Mucosa of descending colon (tissue), 3 donors: ENCODE measurements at regions of chr10 and their contacts with region 1.

Region 1: GRCh38 chr10:119199231-119199992 is 8.0 kb upstream of the GRK5 start:
- DNase-seq: peak in 2 of 3 donors; percentile 49 to 73
- ATAC-seq: peak; percentile 93
- H3K4me3 ChIP-seq: no peak overlapping the region
- H3K4me1 ChIP-seq: no peaks in the 10 kb centered on the region
- CTCF ChIP-seq: peak; percentile 60

Region 2: GRCh38 chr10:119165171-119166110 is 34.0 kb before region 1 on chr10 and contains the start of gene SFXN4:
- intact Hi-C with region 1: no loop called
- DNase-seq: peak; percentile 85 to 90 (median 88)
- ATAC-seq: peak; percentile 98
- H3K4me3 ChIP-seq: peak within 1 kb of the TSS; percentile 66
- H3K4me1 ChIP-seq: peaks cover 9% of the 10 kb centered on the region
- CTCF ChIP-seq: no peak
- total RNA-seq, gene SFXN4: 25.4 to 48.8 (median 34.6) TPM

Region 3: GRCh38 chr10:119305860-119306513 is 106.6 kb after region 1 on chr10:
- intact Hi-C with region 1: no loop called
- DNase-seq: peak; percentile 51 to 63 (median 57)
- ATAC-seq: peak; percentile 76
- H3K4me3 ChIP-seq: no peak overlapping the region
- H3K4me1 ChIP-seq: peaks cover 4% of the 10 kb centered on the region
- CTCF ChIP-seq: no peak

Region 4: DNA sequence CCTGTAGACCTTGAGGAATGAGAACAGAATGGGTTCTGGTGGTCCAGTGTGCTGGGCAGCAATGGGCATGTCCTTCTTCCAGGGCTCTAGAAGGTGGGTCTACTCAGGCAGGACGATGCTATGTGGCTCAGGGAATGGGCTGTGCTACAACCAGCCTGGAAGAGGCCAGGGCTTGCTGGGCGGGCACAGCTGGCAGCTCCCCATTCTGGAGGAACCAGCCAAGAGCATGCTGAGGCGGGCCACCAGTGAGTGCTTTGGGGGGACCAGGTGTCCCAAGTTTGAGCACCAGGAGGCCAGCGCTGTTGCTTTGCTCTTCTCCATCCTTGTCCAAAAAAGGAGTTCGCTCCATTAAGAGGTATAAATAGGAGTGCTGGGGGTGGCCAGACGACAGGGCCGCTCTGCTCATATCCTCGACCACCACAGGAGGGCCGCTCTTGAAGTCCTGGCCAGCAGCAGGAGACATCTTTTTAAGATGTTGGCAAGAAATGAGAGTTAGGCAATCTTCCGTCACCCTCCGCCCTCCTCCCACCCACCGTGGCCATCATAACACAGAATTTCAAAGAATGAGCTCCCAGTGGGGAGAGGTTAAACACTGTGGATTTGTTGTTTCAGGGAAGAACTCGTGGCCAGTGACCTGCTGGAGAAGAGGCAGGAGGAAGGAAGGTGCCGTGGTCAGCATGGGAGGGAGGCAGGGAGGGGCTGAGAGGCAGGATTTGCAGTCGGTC is 149.3 kb after region 1 on chr10:
- intact Hi-C with region 1: no loop called
- DNase-seq: no peak
- ATAC-seq: peak; percentile 24
- H3K4me3 ChIP-seq: no peak overlapping the region
- H3K4me1 ChIP-seq: no peaks in the 10 kb centered on the region
- CTCF ChIP-seq: no peak

Region 5: DNA sequence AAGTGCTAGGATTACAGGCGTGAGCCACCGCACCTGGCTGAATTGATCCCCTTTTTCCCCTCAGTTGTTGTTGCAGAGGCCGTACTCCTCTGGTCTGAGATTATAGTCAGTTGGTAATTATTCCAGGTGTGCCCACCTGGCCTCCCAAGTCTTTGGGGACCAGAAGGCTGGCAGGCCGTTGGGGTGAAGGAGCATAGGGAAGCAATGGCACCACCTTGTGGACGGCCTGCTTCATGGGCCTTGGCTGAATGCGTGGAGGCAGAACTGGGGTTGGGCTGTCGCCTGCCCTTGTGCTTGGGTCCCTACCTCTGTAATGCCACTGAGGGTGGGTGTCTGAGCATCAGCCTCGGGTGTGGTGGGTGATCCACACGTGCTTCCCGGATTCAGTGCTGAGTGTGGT is 217.4 kb after region 1 on chr10:
- intact Hi-C with region 1: loop called (anchors 5 to 10 kb)
- DNase-seq: peak; percentile 70 to 81 (median 75)
- ATAC-seq: peak; percentile 71
- H3K4me3 ChIP-seq: no peak overlapping the region
- H3K4me1 ChIP-seq: no peaks in the 10 kb centered on the region
- CTCF ChIP-seq: peak; percentile 24

Region 6: DNA sequence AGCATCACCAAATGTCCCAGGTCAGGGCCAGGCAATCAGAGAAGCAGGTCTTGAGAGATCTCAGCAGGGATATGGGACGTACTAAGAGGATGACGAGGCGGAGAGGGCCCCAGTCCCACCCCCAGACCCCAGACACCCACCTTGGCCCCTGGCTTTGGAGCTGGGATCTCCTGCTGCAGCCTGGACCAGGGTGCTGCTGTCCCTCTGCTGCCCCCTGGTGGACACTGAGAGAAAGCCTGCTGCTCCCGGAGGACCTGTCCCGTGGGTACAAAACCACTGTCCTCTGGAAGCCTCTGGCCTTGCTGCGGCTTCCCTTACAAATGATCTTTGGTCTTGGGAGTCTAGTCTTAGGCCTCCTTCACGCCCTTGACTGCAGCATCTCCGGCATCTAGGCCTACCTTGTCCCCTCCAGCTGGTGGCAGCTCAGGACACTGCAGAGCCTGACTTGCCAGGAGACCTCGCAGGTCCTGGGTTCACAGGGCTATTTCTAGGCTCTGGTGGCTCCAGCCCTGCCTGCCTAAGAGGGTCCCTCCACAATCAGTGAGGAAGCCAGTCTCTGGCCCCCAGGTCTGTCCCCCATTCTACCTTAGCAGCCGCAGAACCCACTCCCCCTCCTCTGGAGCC is 246.0 kb after region 1 on chr10:
- intact Hi-C with region 1: loop called (anchors 5 to 10 kb)
- DNase-seq: peak; percentile 81 to 87 (median 83)
- ATAC-seq: peak; percentile 86
- H3K4me3 ChIP-seq: no peak overlapping the region
- H3K4me1 ChIP-seq: no peaks in the 10 kb centered on the region
- CTCF ChIP-seq: peak; percentile 91